B cell (primary cell): ENCODE measurements at regions of chr4 and their contacts with region 1.

Region 1: DNA sequence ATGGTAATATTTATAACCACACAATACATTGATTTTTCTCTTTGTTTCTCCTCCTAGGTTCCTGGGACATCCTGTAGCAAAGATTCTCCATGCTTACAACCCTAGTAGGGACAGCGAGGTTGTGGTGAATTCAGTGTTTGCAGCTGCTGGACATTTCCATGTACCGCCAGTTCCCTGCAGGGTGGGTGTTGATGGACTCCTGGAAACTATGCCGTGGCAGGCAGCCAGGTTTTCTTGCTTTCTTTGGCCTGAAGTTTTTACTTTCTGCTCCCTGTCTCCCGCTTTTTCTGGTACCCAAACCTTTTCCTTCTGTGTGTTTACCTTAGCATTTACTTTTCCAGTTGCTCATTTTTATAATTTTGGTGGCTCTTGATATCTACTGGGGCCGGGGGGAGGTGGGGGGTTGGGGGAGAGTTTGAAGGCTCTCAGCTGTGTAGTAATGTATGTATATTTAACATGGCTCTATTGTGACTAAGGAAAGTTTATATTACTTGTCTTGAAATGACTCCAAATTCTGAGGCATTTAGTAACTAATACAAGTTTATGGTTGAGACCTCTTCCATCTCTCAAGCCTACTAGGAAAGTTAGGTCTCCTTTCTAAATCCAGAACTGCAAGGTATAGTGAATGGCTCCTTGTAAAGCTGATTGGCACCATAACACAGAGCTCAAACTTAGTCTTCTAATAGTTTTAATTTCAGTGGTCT is 89.7 kb downstream of the TMEM131L start:
- DNase-seq: no peak
- ATAC-seq: no peak
- H3K4me3 ChIP-seq: no peak overlapping the region
- H3K4me3 Mint-ChIP-seq: no peak overlapping the region
- H3K27ac ChIP-seq: peak overlapping the region in 1 of 2 donors; percentile 57
- H3K27ac Mint-ChIP-seq: peak overlapping the region; percentile 15
- H3K4me1 ChIP-seq: peaks cover 0 to 2% of the 10 kb centered on the region in 2 donors
- H3K4me1 Mint-ChIP-seq: peaks cover 27% of the 10 kb centered on the region
- H3K27me3 ChIP-seq: no peaks in the 10 kb centered on the region
- H3K27me3 Mint-ChIP-seq: no peaks in the 10 kb centered on the region
- CTCF ChIP-seq: no peak

Region 2: GRCh38 chr4:153438916-153439756 is 116.7 kb before region 1 on chr4:
- CTCF ChIA-PET with region 1: interaction called, 3 read pairs
- POLR2A ChIA-PET with region 1: interaction called, 10 read pairs
- intact Hi-C with region 1: no loop called
- DNase-seq: peak; percentile 79
- ATAC-seq: peak; percentile 68
- H3K4me3 ChIP-seq: peak overlapping the region; percentile 44 to 81 (median 59)
- H3K4me3 Mint-ChIP-seq: peak overlapping the region; percentile 75
- H3K27ac ChIP-seq: peak overlapping the region; percentile 93 to 97
- H3K27ac Mint-ChIP-seq: peak overlapping the region; percentile 74
- H3K4me1 ChIP-seq: peaks cover 50 to 60% of the 10 kb centered on the region in 2 donors
- H3K4me1 Mint-ChIP-seq: peaks cover 59% of the 10 kb centered on the region
- H3K27me3 ChIP-seq: no peaks in the 10 kb centered on the region
- H3K27me3 Mint-ChIP-seq: no peaks in the 10 kb centered on the region
- CTCF ChIP-seq: no peak

Region 3: GRCh38 chr4:153684182-153684970 is 128.5 kb after region 1 on chr4 and contains the start of gene TLR2:
- CTCF ChIA-PET with region 1: no interaction called
- POLR2A ChIA-PET with region 1: no interaction called
- intact Hi-C with region 1: no loop called
- DNase-seq: peak; percentile 86
- ATAC-seq: peak; percentile 93
- H3K4me3 ChIP-seq: peak within 1 kb of the TSS; percentile 68 to 90 (median 87)
- H3K4me3 Mint-ChIP-seq: peak within 1 kb of the TSS; percentile 89
- H3K27ac ChIP-seq: peak within 1 kb of the TSS; percentile 38 to 47
- H3K27ac Mint-ChIP-seq: peak within 1 kb of the TSS; percentile 73
- H3K4me1 ChIP-seq: peaks cover 12 to 17% of the 10 kb centered on the region in 2 donors
- H3K4me1 Mint-ChIP-seq: peaks cover 15% of the 10 kb centered on the region
- H3K27me3 ChIP-seq: peaks cover 0 to 15% (median 7%) of the 10 kb centered on the region in 4 experiments
- H3K27me3 Mint-ChIP-seq: peaks cover 7% of the 10 kb centered on the region
- CTCF ChIP-seq: no peak
- total RNA-seq, gene TLR2: 5.0 and 5.4 TPM in 2 replicates